ENCODE measurements at regions of chr11 and their contacts with region 1.

Region 1: GRCh38 chr11:1515082-1516060 is 28.8 kb upstream of the MOB2 start:
- DNase-seq: peak; percentile 39 to 70 (median 67)
- H3K4me3 ChIP-seq: no peak overlapping the region
- H3K27ac ChIP-seq: no peak overlapping the region
- H3K4me1 ChIP-seq: peaks cover 0 to 12% (median 3%) of the 10 kb centered on the region in 4 experiments
- H3K27me3 ChIP-seq: no peaks in the 10 kb centered on the region

Region 2: DNA sequence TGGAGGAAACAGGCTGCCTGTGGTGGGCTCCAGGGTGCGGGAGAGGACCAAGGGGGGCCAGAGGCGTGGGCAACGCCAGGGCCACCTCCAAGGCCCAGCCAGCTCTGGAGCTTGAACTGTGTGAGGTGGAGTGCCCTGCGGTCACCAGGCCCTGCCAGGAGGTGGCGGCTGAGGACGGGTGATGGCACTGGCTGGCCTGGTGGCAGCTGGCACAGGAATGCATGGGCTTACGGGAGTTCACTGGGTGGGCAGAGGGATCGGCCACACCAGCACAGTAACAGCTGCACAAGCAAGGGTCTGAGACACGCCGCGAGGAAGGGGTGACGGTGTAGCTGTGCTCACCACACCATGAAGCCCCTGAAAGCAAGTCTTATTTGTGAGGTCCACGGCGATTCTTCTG is 221.7 kb before region 1 on chr11:
- CTCF ChIA-PET with region 1: interaction called, 14 read pairs
- POLR2A ChIA-PET with region 1: no interaction called
- DNase-seq: peak in 2 of 3 donors; percentile 59 to 60
- H3K4me3 ChIP-seq: no peak overlapping the region
- H3K27ac ChIP-seq: no peak overlapping the region
- H3K4me1 ChIP-seq: peaks cover 0 to 20% (median 12%) of the 10 kb centered on the region in 4 experiments
- H3K27me3 ChIP-seq: no peaks in the 10 kb centered on the region

Region 3: DNA sequence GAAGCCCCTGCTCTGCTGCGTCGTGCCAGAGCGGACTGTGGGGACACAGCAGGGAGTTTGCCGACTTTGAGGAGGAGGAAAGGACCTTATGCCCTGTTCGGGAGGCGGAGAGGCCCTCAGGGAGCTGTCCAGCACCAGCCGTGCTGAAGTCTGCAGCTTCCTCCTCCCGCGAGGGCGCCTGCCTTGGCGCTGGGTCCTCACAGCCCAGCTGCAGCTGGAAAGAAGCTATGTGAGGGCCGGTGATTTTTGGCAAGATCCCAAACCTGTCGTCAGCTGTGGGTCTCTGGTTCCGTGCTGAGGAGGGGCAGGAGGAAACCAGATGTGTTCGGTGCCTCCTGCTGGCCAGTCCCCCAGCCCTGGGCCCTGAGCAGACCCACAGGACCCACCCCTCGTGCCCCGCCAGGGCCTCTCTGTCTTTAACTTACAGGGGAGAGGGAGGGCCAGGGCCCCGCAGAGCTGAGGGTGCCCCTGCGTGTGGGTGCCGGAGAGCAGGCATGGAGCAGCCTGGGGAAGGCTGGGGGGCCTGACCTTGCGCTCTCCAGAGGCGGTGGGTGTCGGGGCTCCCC is 113.6 kb before region 1 on chr11:
- CTCF ChIA-PET with region 1: no interaction called
- POLR2A ChIA-PET with region 1: no interaction called
- DNase-seq: peak; percentile 50 to 82 (median 81)
- H3K4me3 ChIP-seq: no peak overlapping the region
- H3K27ac ChIP-seq: no peak overlapping the region
- H3K4me1 ChIP-seq: peaks cover 0 to 2% (median 0%) of the 10 kb centered on the region in 4 experiments
- H3K27me3 ChIP-seq: peaks cover 0 to 5% (median 0%) of the 10 kb centered on the region in 5 experiments